ENCODE measurements at regions of chr12 and their contacts with region 1.

Region 1: GRCh38 chr12:24929953-24930352 is 18.9 kb downstream of the BCAT1 start:
- DNase-seq: no peak
- H3K4me3 ChIP-seq: no peak overlapping the region
- H3K27ac ChIP-seq: no peak overlapping the region
- H3K4me1 ChIP-seq: no peaks in the 10 kb centered on the region
- H3K27me3 ChIP-seq: no peaks in the 10 kb centered on the region
- CTCF ChIP-seq: no peak
- EP300 ChIP-seq: no peak
- POLR2A ChIP-seq: no peak

Region 2: DNA sequence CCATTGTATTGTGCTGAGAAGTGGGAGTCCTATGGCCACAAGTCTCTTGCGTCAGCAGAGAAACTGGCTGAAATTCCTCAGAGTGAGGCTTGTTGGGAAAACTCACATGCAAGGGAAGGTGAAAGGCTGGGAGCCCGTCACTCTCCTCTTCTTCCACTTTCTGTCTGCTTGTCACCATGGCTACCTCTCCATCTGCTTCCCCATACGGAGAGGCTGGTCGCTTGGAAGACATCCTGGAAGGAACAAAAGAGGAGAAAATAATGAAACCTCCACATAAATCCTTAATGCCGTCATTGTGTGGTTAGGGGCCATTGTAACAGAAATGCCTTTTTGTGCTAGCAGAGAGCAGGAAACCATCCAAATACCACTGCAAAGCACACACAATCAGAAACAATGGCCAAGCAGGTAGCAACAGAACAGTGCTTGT is 1034.1 kb before region 1 on chr12:
- in situ Hi-C with region 1: no loop called
- intact Hi-C with region 1: loop called (anchors 5 kb)
- DNase-seq: no peak
- H3K4me3 ChIP-seq: no peak overlapping the region
- H3K27ac ChIP-seq: no peak overlapping the region
- H3K4me1 ChIP-seq: no peaks in the 10 kb centered on the region
- H3K27me3 ChIP-seq: no peaks in the 10 kb centered on the region
- CTCF ChIP-seq: no peak
- EP300 ChIP-seq: no peak
- POLR2A ChIP-seq: no peak